Activated naive CD4-positive, alpha-beta T cell treated with anti-CD3 and anti-CD28 coated beads for 36 hours (primary cell): ENCODE measurements at regions of chr19 and their contacts with region 1.

Region 1: DNA sequence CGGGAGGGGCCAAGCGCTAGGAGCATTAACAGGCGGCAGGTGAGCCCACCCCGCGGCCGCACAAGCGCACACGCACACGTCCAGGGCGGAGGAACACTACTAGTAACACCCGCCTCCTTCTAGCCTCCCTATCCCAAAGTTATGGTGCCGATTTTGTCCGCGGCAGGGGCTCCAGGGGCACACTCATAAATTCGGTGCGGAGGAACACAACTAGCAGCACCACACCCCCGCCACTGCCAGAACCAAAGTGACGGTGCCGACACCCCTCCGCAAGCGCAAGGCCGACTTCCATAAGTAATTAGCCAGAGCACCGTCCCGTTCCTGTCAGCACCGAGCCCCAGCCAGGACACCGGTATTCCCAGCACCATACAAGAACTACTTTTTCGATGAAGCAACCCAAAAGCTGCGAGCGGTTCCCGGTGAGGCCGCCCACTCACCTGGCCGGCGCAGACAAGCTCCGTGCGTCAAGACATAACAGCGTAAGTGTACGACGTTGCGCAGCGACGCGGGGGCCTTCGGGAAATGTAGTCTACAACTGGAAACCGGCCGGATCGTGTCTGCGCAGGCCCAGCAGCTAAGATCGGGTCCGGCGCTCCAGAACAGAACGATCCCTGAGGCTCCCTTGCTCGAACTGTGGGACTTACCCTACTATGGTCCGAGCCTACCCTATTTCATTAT is at the starts of genes ZNF540 and ZNF571:
- DNase-seq: peak; percentile 96
- H3K4me3 Mint-ChIP-seq: peak within 1 kb of the TSS; percentile 99
- H3K27ac Mint-ChIP-seq: peak within 1 kb of the TSS; percentile 97
- H3K4me1 Mint-ChIP-seq: peaks cover 17% of the 10 kb centered on the region
- H3K27me3 Mint-ChIP-seq: no peaks in the 10 kb centered on the region
- total RNA-seq, gene ZNF540: 1.0 to 1.9 TPM
- total RNA-seq, gene ZNF571: 2.8 to 3.5 TPM

Region 2: DNA sequence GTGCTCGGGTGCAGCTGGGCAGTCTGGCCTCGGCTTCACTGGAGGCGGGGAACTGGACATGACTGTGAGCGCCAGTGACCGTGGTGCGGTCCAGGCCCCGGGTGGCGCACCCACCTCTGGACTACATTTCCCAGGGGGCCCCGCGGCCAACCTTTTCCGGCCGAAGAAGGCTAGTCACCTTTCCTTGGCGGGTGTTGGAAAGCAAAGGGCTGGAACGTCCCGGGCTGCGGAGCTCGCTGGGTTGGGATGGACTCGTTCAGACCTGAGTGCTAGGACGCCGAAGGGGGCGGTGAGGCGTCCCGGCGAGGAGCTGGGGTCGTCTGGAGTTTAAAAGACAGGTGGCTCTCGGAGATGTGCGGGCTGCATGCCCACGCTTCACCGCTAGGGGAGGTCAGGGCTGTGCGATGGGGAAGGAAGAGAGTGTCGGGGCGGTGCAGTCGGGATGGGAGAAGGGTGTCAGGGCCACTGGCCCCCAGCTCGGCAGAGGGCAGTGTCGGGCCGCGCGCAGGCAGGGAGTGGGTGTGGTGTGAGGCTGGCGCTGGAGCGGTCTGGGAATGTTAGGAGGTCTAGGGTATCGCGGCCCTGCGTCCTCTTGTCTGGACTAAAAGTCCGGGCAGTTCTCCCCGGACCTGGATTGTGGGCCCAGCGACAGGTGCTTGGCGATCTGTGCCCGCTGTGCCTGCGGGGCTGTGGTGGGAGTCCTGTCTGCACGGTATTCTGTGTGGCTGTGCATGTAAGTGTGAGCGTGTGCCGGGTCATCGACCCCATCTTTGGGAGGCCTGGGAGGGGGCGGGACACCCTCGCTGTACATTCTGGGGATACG is 621.2 kb before region 1 on chr19:
- CTCF ChIA-PET with region 1: no interaction called
- intact Hi-C with region 1: loop called (anchors 1 kb)
- DNase-seq: peak; percentile 91
- H3K4me3 Mint-ChIP-seq: peak overlapping the region; percentile 92
- H3K27ac Mint-ChIP-seq: peak overlapping the region; percentile 95
- H3K4me1 Mint-ChIP-seq: peaks cover 11% of the 10 kb centered on the region
- H3K27me3 Mint-ChIP-seq: no peaks in the 10 kb centered on the region

Region 3: GRCh38 chr19:37334179-37335071 is 260.0 kb before region 1 on chr19:
- CTCF ChIA-PET with region 1: no interaction called
- intact Hi-C with region 1: loop called (anchors 1 kb)
- DNase-seq: peak; percentile 91
- H3K4me3 Mint-ChIP-seq: peak overlapping the region; percentile 85
- H3K27ac Mint-ChIP-seq: peak overlapping the region; percentile 77
- H3K4me1 Mint-ChIP-seq: peaks cover 27% of the 10 kb centered on the region
- H3K27me3 Mint-ChIP-seq: no peaks in the 10 kb centered on the region

Region 4: DNA sequence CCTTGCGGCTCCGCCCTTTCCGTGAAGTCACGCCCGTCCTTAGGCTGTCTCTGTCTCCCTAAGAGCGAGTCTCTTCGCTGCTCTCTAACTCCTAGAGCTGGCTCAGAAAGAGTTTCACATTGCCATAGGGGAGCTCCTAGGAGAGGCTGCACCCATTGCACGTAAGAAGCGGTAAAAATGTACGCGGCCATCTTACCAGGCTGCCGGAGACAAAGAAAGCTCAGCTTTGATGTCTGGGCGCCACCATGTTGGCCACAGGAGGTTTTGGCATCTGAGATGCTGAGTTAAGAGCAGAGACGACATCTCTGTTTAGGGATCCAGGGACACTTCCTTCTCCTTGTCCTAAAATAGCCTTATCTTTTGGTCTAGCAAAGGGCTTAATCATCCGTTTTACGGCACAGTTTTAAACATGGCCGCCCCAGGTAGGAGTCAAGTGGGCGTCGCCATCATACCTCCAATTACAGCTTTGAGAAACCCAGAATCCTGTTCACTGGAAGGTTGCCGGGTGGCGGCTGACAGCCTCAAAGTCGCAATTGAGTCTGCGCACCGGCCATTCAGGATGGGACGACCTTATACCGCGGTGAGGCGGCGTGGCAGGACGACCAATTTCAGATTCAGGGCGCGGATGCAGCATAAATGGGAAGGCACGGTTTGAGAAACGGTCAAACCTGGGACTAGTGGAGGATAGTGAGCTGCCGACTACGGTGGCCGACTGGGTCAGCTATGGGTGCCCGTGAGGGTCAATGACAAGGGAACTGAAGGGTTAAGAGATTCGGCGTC is 87.9 kb before region 1 on chr19 and contains the start of gene ZNF793:
- CTCF ChIA-PET with region 1: interaction called, 3 read pairs
- intact Hi-C with region 1: loop called (anchors 1 kb)
- DNase-seq: peak; percentile 85
- H3K4me3 Mint-ChIP-seq: no peak within 1 kb of the TSS
- H3K27ac Mint-ChIP-seq: no peak within 1 kb of the TSS
- H3K4me1 Mint-ChIP-seq: no peaks in the 10 kb centered on the region
- H3K27me3 Mint-ChIP-seq: no peaks in the 10 kb centered on the region
- total RNA-seq, gene ZNF793: 3.8 to 3.9 TPM

Region 5: DNA sequence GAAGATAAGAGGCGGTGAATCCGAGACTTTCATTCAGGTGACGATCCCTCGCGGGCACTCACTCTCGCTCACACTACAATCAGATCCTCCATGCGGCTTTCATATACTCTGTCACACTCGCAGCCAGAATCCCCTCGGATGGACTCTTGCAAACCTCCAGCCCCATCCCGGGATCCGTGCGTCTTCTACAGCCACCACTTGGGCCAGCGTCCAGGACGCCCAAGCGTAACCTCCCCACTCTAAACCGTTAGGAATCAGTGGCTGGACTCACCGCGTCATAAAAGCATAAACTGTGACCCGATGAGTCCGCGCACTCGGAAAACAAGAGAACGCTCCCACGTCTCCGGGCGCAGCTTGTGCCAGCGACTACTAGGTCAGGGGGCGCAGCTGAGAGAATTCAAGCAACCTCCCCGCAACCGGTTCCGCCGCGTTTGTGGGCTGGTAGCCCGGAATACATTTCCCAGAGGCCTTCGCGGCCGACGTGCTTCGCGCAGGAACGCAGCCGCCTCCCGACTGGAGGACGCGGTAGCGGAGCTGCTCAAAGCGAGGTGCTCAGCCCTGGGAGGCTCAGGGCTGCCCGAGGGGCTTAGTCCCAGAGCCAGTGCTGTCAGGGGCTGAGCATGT is 97.5 kb after region 1 on chr19:
- CTCF ChIA-PET with region 1: no interaction called
- intact Hi-C with region 1: loop called (anchors 2 kb)
- DNase-seq: peak; percentile 85
- H3K4me3 Mint-ChIP-seq: peak overlapping the region; percentile 93
- H3K27ac Mint-ChIP-seq: peak overlapping the region; percentile 82
- H3K4me1 Mint-ChIP-seq: peaks cover 9% of the 10 kb centered on the region
- H3K27me3 Mint-ChIP-seq: no peaks in the 10 kb centered on the region

Region 6: GRCh38 chr19:37817180-37817981 is 222.9 kb after region 1 on chr19:
- CTCF ChIA-PET with region 1: no interaction called
- intact Hi-C with region 1: no loop called
- DNase-seq: peak; percentile 7
- H3K4me3 Mint-ChIP-seq: no peak overlapping the region
- H3K27ac Mint-ChIP-seq: no peak overlapping the region
- H3K4me1 Mint-ChIP-seq: peaks cover 5% of the 10 kb centered on the region
- H3K27me3 Mint-ChIP-seq: peaks cover 26% of the 10 kb centered on the region